Activated CD4-positive, alpha-beta T cell treated with anti-CD3 and anti-CD28 coated beads for 36 hours (primary cell): ENCODE measurements at regions of chr10 and their contacts with region 1.

Region 1: GRCh38 chr10:94334857-94335256 is 27.9 kb downstream of the NOC3L start:
- DNase-seq: no peak
- ATAC-seq: no peak
- H3K4me3 Mint-ChIP-seq: no peak overlapping the region
- H3K27ac Mint-ChIP-seq: no peak overlapping the region
- H3K4me1 Mint-ChIP-seq: no peaks in the 10 kb centered on the region
- H3K27me3 Mint-ChIP-seq: no peaks in the 10 kb centered on the region

Region 2: GRCh38 chr10:94351089-94351488 is 16.2 kb after region 1 on chr10:
- CTCF ChIA-PET with region 1: interaction called, 5 read pairs
- POLR2A ChIA-PET with region 1: no interaction called
- intact Hi-C with region 1: loop called in 1 of 2 experiments (anchors 2 kb)
- DNase-seq: no peak
- ATAC-seq: no peak
- H3K4me3 Mint-ChIP-seq: no peak overlapping the region
- H3K27ac Mint-ChIP-seq: no peak overlapping the region
- H3K4me1 Mint-ChIP-seq: no peaks in the 10 kb centered on the region
- H3K27me3 Mint-ChIP-seq: no peaks in the 10 kb centered on the region

Region 3: GRCh38 chr10:95635319-95635733 is 1300.5 kb after region 1 on chr10:
- CTCF ChIA-PET with region 1: no interaction called
- POLR2A ChIA-PET with region 1: no interaction called
- intact Hi-C with region 1: loop called in 1 of 2 experiments (anchors 10 kb)
- DNase-seq: no peak
- ATAC-seq: no peak
- H3K4me3 Mint-ChIP-seq: no peak overlapping the region
- H3K27ac Mint-ChIP-seq: no peak overlapping the region
- H3K4me1 Mint-ChIP-seq: no peaks in the 10 kb centered on the region
- H3K27me3 Mint-ChIP-seq: no peaks in the 10 kb centered on the region